ENCODE measurements at regions of chr20 and their contacts with region 1.

Region 1: DNA sequence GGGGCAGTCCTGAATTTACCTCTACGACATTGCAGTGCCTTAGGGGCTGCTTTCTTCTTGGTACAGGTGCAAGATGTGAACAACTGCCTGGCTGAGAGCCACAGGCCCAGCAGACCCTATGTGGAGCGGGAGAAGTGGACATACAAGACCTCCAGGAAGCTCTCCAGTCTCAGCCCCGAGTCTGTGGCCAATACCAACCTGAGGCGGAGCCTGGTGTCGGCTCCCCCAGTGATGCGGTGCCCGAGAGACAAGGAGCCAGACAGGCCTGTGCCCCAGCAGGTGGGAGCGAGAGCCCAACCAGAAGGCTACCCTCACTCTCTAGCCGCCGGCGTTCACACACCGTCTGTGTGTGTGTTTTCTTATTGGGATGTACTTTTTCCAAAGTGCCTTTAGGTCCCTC is 59.6 kb downstream of the EFCAB8 start:
- DNase-seq: no peak
- H3K4me3 ChIP-seq: no peak overlapping the region
- H3K27ac ChIP-seq: no peak overlapping the region
- H3K4me1 ChIP-seq: no peaks in the 10 kb centered on the region
- H3K27me3 ChIP-seq: peaks cover 5% of the 10 kb centered on the region
- CTCF ChIP-seq: no peak

Region 2: DNA sequence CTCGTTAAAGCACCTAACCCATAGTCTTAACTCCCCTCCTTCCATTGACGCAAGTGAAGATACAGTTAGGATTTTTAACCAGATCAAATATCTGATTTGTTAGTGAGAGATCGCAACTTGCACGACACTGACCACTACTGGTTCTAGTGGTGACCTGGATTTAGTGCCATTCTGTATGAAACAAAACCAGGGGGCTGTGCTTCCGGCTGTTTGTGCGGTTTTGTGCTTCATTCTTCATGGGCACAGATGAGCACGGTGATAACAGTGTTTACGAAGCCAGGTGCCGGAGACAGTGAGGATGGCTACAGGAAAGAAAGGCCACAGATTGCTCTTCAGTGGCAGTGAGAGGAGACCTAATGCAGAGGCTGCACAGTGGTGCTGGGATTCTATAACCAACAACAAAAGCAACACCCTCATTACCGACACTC is 408.6 kb before region 1 on chr20:
- CTCF ChIA-PET with region 1: no interaction called
- POLR2A ChIA-PET with region 1: no interaction called
- intact Hi-C with region 1: no loop called
- DNase-seq: no peak
- H3K4me3 ChIP-seq: no peak overlapping the region
- H3K27ac ChIP-seq: no peak overlapping the region
- H3K4me1 ChIP-seq: no peaks in the 10 kb centered on the region
- H3K27me3 ChIP-seq: no peaks in the 10 kb centered on the region
- CTCF ChIP-seq: no peak

Region 3: DNA sequence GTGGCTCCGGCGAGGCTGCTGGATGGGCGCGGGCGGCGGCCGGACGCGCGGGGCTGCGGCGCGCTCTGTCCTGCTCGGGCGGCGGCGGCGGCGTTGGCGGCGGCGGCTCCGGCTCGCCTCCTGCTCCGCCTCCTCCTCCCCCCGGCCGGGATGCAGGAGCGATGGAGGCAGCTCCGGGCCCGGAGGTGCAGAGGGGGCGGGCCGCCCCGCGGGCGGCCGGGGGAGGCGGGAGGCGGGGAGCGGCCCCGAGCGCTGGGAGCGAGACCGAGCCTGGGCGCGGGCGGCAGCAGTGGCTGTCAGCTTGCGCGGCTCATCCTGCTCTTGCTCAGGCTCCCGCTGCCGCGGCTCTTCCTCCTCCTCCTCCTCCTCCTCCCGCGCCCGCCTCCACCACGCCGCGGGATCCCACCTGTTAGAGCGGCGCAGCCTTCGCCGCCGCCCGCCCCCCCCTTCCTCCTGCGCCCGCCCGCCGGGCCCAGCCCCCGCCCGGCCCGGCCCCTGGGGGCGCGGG is 333.2 kb before region 1 on chr20 and contains the start of gene NOL4L:
- CTCF ChIA-PET with region 1: no interaction called
- POLR2A ChIA-PET with region 1: no interaction called
- intact Hi-C with region 1: no loop called
- DNase-seq: peak; percentile 30
- H3K4me3 ChIP-seq: peak within 1 kb of the TSS; percentile 38
- H3K27ac ChIP-seq: no peak within 1 kb of the TSS
- H3K4me1 ChIP-seq: no peaks in the 10 kb centered on the region
- H3K27me3 ChIP-seq: peaks cover 42% of the 10 kb centered on the region
- CTCF ChIP-seq: no peak
- total RNA-seq, gene NOL4L: 1.4 and 3.2 TPM in 2 replicates

Region 4: DNA sequence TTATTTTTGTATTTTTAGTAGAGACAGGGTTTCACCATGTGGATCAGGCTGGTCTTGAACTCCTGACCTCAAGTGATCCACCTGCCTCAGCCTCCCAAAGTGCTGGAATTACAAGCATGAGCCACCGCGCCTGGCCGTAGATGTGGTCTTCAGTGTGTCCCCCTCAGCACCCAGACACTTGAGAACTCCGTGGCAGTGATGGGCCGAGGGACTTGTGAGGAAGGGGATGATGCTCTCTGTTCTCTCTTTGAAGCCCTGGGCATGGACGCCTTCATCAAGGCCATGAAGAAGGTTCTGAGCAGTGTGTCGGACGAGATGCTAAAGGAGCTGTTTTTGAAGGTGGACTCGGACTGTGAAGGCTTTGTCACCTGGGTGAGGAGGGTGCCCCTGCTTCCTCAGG is 42.6 kb before region 1 on chr20:
- CTCF ChIA-PET with region 1: no interaction called
- POLR2A ChIA-PET with region 1: interaction called, 19 read pairs
- intact Hi-C with region 1: no loop called
- DNase-seq: no peak
- H3K4me3 ChIP-seq: no peak overlapping the region
- H3K27ac ChIP-seq: no peak overlapping the region
- H3K4me1 ChIP-seq: no peaks in the 10 kb centered on the region
- H3K27me3 ChIP-seq: no peaks in the 10 kb centered on the region
- CTCF ChIP-seq: no peak

Region 5: GRCh38 chr20:33046412-33046811 is 128.1 kb after region 1 on chr20:
- CTCF ChIA-PET with region 1: no interaction called
- POLR2A ChIA-PET with region 1: no interaction called
- intact Hi-C with region 1: no loop called
- DNase-seq: no peak
- H3K4me3 ChIP-seq: no peak overlapping the region
- H3K27ac ChIP-seq: no peak overlapping the region
- H3K4me1 ChIP-seq: no peaks in the 10 kb centered on the region
- H3K27me3 ChIP-seq: no peaks in the 10 kb centered on the region
- CTCF ChIP-seq: no peak

Region 6: DNA sequence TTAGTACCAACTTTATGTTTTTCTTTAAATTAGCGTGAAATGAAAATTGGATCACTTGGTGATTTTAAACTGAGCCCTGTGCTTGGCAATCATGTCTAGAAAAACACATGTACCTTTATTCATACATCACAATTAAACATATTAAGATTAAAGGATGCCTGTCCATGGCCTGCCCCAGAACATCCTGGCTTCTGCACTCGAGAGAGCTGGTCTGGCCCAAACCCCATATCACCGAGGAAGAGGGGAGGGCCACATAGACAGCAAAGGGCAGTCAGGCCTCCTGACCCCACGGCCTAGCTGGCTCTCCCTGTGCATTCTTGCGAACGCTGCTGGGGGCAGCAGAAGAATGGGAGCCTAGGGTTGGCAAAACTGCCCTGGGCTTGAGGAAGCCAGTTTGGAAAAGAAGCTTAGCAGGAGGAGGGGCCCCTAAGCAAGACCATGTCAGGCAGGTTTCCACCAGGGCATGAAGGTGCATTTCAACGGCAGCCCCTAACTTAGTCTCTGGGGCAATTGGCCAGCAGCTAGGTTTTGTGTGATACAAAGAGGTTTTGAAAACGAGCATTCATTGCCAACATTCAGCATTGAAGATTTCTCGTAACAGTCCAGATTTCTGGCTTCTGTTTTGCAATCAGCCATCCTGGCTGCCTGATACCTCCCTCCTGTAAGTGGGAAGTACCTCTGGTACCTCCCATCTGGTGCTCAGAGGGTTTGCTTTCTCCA is 144.0 kb after region 1 on chr20:
- CTCF ChIA-PET with region 1: no interaction called
- POLR2A ChIA-PET with region 1: no interaction called
- intact Hi-C with region 1: no loop called
- DNase-seq: no peak
- H3K4me3 ChIP-seq: no peak overlapping the region
- H3K27ac ChIP-seq: no peak overlapping the region
- H3K4me1 ChIP-seq: no peaks in the 10 kb centered on the region
- H3K27me3 ChIP-seq: no peaks in the 10 kb centered on the region
- CTCF ChIP-seq: no peak

Measured in A673 (cell line).